Dorsolateral prefrontal cortex (tissue), 120 donors: ENCODE measurements at regions of chr9 and their contacts with region 1.

Region 1: DNA sequence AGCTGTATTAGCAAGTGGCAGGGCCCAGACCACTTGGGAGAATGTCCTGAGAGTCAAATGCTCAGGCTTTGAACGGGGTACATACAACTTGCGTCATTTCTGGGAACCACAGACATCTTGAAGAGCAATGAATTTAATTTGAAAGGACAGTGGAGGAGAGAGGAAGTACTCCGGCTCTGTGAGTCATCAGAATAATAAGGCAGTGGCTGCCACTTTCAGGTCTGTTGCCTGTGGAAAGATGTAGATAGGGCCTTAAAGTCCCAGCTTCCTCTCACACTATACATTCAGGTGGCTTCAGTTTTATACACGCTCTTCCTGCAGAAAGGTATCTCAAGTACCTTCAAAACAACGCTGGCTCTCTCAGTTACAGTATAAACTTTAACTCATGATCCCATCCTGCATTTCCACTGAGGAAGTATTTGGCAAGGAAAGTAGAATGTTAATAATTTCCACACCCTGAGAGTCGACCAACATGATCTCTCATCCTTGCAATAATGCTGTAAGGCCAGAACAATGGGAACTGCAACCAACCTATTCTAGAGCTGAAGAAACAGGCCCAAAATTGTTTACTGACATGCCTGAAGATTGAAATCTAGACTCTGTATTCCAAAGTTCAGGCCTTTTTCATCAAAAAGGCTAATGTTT is 6.8 kb upstream of the PRUNE2 start:
- DNase-seq: no peak
- H3K4me3 ChIP-seq: no peak overlapping the region
- H3K27ac ChIP-seq: peak overlapping the region in 1 of 59 donors; percentile 22
- H3K27me3 ChIP-seq: no peaks in the 10 kb centered on the region
- CTCF ChIP-seq: no peak

Region 2: GRCh38 chr9:76773036-76773435 is 139.7 kb before region 1 on chr9:
- intact Hi-C with region 1: no loop called
- DNase-seq: no peak
- H3K4me3 ChIP-seq: no peak overlapping the region
- H3K27ac ChIP-seq: peak overlapping the region in 6 of 59 donors; percentile 6 to 45 (median 34)
- H3K27me3 ChIP-seq: no peaks in the 10 kb centered on the region
- CTCF ChIP-seq: no peak

Region 3: GRCh38 chr9:76859860-76860259 is 52.9 kb before region 1 on chr9:
- intact Hi-C with region 1: loop called in 1 of 2 experiments (anchors 5 kb)
- DNase-seq: no peak
- H3K4me3 ChIP-seq: no peak overlapping the region
- H3K27ac ChIP-seq: peak overlapping the region in 4 of 59 donors; percentile 10 to 64 (median 18)
- H3K27me3 ChIP-seq: no peaks in the 10 kb centered on the region
- CTCF ChIP-seq: no peak

Region 4: DNA sequence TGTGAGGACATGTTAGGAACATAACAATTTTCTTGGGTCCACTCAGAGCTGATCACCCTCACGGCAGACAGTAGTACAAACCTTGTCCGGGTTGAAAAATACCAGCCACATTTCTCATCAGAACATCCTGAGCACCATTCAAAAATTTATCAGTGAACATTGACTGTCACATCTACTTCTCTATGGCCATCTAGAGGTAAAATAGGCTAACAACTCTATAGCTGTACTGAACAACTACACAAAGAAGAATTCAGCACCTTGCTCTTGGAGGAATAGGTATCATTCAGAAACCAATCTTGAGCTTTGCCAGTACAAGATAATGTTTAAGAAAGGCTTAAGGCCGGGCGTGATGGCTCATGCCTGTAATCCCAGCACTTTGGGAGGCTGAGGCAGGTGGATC is 159.3 kb after region 1 on chr9:
- intact Hi-C with region 1: no loop called
- DNase-seq: no peak
- H3K4me3 ChIP-seq: no peak overlapping the region
- H3K27ac ChIP-seq: no peak overlapping the region
- H3K27me3 ChIP-seq: peaks cover 0 to 19% (median 0%) of the 10 kb centered on the region in 45 donors
- CTCF ChIP-seq: no peak

Region 5: GRCh38 chr9:77131399-77131798 is 218.6 kb after region 1 on chr9:
- intact Hi-C with region 1: no loop called
- DNase-seq: no peak
- H3K4me3 ChIP-seq: no peak overlapping the region
- H3K27ac ChIP-seq: no peak overlapping the region
- H3K27me3 ChIP-seq: peaks cover 0 to 10% (median 0%) of the 10 kb centered on the region in 45 donors
- CTCF ChIP-seq: no peak

Region 6: DNA sequence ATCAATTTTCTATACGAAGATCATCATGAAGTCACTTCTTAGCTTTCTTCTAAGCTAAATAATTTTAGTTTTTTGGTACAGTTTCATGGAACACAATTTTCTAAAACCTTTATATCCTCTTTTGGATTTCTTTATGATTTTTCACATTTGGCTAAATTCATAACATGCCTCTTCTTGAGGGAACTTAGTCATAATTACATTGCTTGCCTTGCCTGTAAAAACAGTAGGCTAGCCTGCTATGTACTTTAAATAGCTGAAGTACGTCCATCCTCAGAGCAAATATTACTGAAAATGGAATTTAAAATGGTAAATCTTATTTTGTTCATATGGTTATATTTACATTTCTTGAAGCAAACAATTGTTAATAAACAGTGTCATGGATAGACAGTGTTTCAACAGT is 489.5 kb after region 1 on chr9:
- intact Hi-C with region 1: no loop called
- DNase-seq: no peak
- H3K4me3 ChIP-seq: no peak overlapping the region
- H3K27ac ChIP-seq: no peak overlapping the region
- H3K27me3 ChIP-seq: no peaks in the 10 kb centered on the region
- CTCF ChIP-seq: no peak